A673 (cell line): ENCODE measurements at regions of chr17 and their contacts with region 1.

Region 1: DNA sequence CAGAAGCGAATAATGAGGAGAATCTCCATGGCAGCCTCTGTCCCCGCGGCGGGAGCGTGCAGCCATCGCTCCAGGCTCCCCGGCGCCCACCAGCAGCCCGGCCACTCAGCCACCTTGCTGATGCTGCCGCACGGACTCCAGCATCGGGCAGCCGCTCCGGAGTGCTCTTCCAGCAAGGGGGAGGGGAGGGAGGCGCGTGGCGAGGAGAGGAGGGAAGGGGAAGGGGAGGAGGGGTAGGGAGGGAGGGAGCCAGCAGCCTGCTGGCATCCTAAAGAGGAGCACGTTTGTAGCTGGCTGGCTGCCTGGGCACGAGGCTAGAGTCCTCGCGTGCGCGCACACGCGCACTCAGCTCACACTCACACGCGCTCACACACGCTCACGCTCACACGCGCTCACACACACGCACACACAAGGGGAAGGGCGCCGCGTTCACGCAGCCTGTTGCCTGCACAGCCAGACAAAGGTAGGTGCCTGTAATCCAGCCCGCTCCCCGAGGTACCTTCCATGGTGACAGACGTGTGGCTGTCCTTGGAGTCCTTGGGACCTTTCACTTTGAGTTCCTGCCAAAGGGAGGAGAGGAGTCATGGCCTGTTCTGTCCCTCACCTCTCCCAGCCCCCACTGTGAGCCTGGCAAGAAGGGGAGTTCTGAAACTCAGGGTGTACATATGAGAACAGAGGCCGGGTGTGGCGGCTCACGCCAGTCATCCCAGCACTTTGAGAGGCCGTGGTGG is 82.1 kb downstream of the TIMM22 start:
- DNase-seq: peak; percentile 63
- H3K4me3 ChIP-seq: no peak overlapping the region
- H3K27ac ChIP-seq: no peak overlapping the region
- H3K4me1 ChIP-seq: peaks cover 34% of the 10 kb centered on the region
- H3K27me3 ChIP-seq: no peaks in the 10 kb centered on the region
- CTCF ChIP-seq: no peak

Region 2: GRCh38 chr17:828761-829160 is 250.2 kb before region 1 on chr17:
- CTCF ChIA-PET with region 1: no interaction called
- POLR2A ChIA-PET with region 1: no interaction called
- intact Hi-C with region 1: no loop called
- DNase-seq: no peak
- H3K4me3 ChIP-seq: no peak overlapping the region
- H3K27ac ChIP-seq: no peak overlapping the region
- H3K4me1 ChIP-seq: no peaks in the 10 kb centered on the region
- H3K27me3 ChIP-seq: no peaks in the 10 kb centered on the region
- CTCF ChIP-seq: no peak

Region 3: DNA sequence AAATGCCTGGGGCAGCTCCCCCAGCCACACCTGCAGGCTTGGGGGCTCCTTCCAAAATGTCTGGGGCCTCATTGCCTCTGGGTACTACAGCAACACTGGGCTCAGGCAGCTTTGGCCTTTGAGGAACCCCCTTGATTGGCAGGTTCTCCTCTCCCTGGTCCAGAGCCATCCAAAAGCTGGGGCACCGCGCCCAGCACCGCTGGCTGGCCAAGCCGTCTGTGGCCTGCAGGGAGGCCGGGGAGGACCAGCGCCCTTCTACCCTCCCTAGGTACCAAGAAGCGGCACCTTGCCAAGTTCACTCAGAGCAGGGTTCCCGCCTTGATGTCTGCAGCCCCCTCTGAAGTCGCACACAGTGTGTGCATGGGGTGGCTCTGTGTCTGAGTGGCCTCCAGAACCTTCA is 52.0 kb before region 1 on chr17:
- CTCF ChIA-PET with region 1: no interaction called
- POLR2A ChIA-PET with region 1: interaction called, 17 read pairs
- intact Hi-C with region 1: no loop called
- DNase-seq: no peak
- H3K4me3 ChIP-seq: no peak overlapping the region
- H3K27ac ChIP-seq: no peak overlapping the region
- H3K4me1 ChIP-seq: no peaks in the 10 kb centered on the region
- H3K27me3 ChIP-seq: no peaks in the 10 kb centered on the region
- CTCF ChIP-seq: no peak

Region 4: GRCh38 chr17:1216217-1217088 is 137.5 kb after region 1 on chr17:
- CTCF ChIA-PET with region 1: no interaction called
- POLR2A ChIA-PET with region 1: no interaction called
- intact Hi-C with region 1: no loop called
- DNase-seq: no peak
- H3K4me3 ChIP-seq: no peak overlapping the region
- H3K27ac ChIP-seq: no peak overlapping the region
- H3K4me1 ChIP-seq: no peaks in the 10 kb centered on the region
- H3K27me3 ChIP-seq: peaks cover 2% of the 10 kb centered on the region
- CTCF ChIP-seq: no peak

Region 5: DNA sequence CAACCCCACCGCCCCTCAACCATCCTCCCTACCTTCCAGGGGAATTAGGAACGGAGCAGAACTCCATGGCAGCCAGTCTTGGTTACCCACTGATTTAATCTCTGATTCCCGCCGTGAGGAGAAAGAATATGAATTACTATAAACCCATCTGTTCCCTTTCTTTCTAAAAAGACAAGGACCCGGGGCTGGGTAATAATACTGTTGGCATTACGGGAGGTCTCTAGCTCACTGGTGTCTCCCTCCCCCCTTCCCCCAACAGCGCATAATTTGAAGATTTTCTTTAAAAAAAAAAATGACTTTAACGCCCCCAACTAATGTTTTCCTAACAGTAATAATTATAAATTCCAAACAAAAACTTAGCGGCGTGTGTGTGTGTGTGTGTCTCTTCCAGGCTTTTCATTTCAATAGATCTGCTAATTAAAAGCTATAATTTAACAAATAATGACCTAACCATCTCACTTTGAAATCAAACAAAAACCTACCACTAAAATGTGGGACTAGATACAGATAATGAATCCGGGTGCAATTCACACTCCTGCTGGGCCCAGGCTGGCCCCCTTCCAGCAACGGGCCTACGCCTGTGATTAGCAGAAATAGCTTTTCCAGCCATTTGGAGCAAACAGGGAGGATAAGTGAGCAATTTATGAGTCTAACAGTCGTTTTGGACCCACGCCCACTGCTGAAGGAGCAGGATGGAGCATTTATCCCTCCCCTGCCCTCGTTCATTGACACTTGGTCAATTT is 173.0 kb after region 1 on chr17:
- CTCF ChIA-PET with region 1: interaction called, 14 read pairs
- POLR2A ChIA-PET with region 1: no interaction called
- intact Hi-C with region 1: no loop called
- DNase-seq: peak; percentile 93
- H3K4me3 ChIP-seq: peak overlapping the region; percentile 2
- H3K27ac ChIP-seq: peak overlapping the region; percentile 45
- H3K4me1 ChIP-seq: peaks cover 16% of the 10 kb centered on the region
- H3K27me3 ChIP-seq: no peaks in the 10 kb centered on the region
- CTCF ChIP-seq: no peak

Region 6: GRCh38 chr17:1331708-1332107 is 252.7 kb after region 1 on chr17:
- CTCF ChIA-PET with region 1: no interaction called
- POLR2A ChIA-PET with region 1: no interaction called
- intact Hi-C with region 1: no loop called
- DNase-seq: no peak
- H3K4me3 ChIP-seq: no peak overlapping the region
- H3K27ac ChIP-seq: no peak overlapping the region
- H3K4me1 ChIP-seq: no peaks in the 10 kb centered on the region
- H3K27me3 ChIP-seq: no peaks in the 10 kb centered on the region
- CTCF ChIP-seq: no peak